Activated T-helper 2 cell treated with anti-CD3 and anti-CD28 coated beads, Interferon-gamma antibody, Interleukin-2, Interleukin-4, amounts not matched to agents 10 μg/mL and 5 μg/mL and 100 μg/mL, durations not matched to agents 14 hours and 24 hours and 36 hours (primary cell): ENCODE measurements at regions of chr19 and their contacts with region 1.

Region 1: DNA sequence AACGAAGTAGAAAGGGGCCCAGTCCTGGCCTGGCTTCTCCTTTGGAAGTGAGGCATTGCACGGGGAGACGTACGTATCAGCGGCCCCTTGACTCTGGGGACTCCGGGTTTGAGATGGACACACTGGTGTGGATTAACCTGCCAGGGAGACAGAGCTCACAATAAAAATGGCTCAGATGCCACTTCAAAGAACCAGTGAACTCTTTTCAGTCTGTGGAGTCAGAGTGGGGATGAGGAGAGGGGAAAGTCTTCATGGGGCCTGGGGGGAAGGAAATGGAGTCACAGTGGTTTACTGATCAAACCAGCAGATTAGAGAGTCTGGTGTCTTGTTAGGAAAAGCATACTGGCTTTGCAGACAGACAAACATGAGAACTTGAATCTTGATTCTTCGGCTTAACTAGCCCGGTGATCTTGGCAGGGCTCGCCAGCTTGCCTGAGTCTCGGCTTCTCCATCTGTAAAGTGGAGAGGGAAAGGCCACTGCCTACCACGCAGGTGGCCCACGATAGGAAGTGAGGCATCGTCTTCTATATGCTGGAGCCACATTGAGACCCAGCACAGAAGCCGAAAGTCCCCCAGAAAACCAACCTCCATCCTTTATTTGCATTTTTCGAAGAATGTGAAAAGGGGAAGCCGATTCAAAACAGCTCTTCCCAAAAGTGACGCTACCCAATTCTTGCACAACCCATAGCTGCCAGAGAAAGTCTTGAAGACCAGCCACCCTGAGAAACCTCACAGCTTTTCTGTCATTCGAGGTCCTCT is at the start of gene FFAR1:
- DNase-seq: peak; percentile 23
- H3K4me3 Mint-ChIP-seq: peak within 1 kb of the TSS; percentile 58
- H3K27ac Mint-ChIP-seq: peak within 1 kb of the TSS; percentile 97
- H3K4me1 Mint-ChIP-seq: peaks cover 30% of the 10 kb centered on the region
- H3K27me3 Mint-ChIP-seq: peaks cover 6% of the 10 kb centered on the region
- total RNA-seq, gene FFAR1: 0.09 and 0.21 TPM in 2 replicates

Region 2: GRCh38 chr19:35154525-35155406 is 192.6 kb before region 1 on chr19 and contains the start of gene FXYD5:
- intact Hi-C with region 1: loop called (anchors 5 kb)
- DNase-seq: peak; percentile 54
- H3K4me3 Mint-ChIP-seq: peak within 1 kb of the TSS; percentile 100
- H3K27ac Mint-ChIP-seq: peak within 1 kb of the TSS; percentile 100
- H3K4me1 Mint-ChIP-seq: peaks cover 37% of the 10 kb centered on the region
- H3K27me3 Mint-ChIP-seq: peaks cover 6% of the 10 kb centered on the region
- total RNA-seq, gene FXYD5: 257 and 271 TPM in 2 replicates

Region 3: GRCh38 chr19:35269421-35270117 is 77.8 kb before region 1 on chr19:
- intact Hi-C with region 1: loop called (anchors 5 kb)
- DNase-seq: peak; percentile 76
- H3K4me3 Mint-ChIP-seq: peak overlapping the region; percentile 72
- H3K27ac Mint-ChIP-seq: peak overlapping the region; percentile 67
- H3K4me1 Mint-ChIP-seq: peaks cover 12% of the 10 kb centered on the region
- H3K27me3 Mint-ChIP-seq: no peaks in the 10 kb centered on the region

Region 4: DNA sequence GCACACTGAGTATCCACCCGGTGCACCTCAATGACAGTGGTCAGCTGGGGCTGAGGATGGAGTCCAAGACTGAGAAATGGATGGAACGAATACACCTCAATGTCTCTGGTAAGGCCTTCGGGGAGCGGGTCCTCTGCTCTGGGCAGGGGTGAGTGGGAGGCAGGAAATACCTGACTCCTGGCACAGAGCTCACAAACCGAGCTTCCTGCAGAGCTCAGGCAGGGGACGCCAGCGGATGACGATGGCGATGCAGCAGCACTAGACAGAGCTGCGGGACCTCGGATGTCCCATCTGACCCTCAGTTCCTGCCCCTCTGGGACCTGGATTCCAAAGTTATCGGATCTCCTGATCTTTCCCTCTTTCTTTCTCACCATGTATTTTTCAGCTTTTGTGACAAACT is 14.5 kb before region 1 on chr19:
- intact Hi-C with region 1: loop called (anchors 2 kb)
- DNase-seq: no peak
- H3K4me3 Mint-ChIP-seq: no peak overlapping the region
- H3K27ac Mint-ChIP-seq: peak overlapping the region; percentile 34
- H3K4me1 Mint-ChIP-seq: peaks cover 20% of the 10 kb centered on the region
- H3K27me3 Mint-ChIP-seq: no peaks in the 10 kb centered on the region

Region 5: DNA sequence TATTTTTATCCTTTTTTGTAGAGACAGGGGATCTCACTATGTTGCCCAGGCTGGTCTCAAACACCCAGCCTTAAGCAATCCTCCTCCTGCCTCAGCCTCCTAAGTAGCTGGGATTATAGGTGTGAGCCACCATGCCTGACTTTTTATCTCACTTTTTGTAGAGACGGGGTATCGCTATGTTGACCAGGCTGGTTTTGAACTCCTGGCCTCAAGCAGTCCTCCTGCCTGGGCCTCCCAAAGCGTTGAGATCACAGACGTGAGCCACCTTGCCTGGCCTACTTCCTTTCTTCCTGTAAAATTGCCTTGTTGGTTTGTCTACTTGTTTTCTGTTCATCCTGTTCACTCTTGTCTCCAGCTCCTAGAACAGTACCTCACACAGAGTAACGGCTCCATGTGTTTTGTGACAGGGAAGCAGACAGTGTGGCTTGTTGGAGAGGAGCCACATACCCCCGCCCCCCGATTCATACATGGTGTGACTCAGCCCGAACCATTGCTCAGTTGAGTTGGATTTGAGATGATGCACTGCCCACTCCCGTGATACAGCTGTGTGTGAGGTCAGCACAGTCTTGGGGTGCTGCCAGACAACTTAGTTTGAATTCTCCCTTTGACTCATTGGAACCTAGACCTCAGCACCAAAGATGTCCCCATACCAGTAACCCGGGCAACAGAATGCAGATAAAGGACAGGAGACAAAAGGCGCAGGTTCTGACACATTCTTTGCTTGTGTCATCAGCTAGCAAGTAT is 57.7 kb after region 1 on chr19:
- intact Hi-C with region 1: loop called (anchors 2 kb)
- DNase-seq: peak; percentile 20
- H3K4me3 Mint-ChIP-seq: no peak overlapping the region
- H3K27ac Mint-ChIP-seq: peak overlapping the region; percentile 80
- H3K4me1 Mint-ChIP-seq: peaks cover 22% of the 10 kb centered on the region
- H3K27me3 Mint-ChIP-seq: peaks cover 11% of the 10 kb centered on the region

Region 6: GRCh38 chr19:35451338-35452096 is 104.2 kb after region 1 on chr19:
- intact Hi-C with region 1: loop called (anchors 1 kb)
- DNase-seq: peak; percentile 14
- H3K4me3 Mint-ChIP-seq: peak overlapping the region; percentile 10
- H3K27ac Mint-ChIP-seq: peak overlapping the region; percentile 88
- H3K4me1 Mint-ChIP-seq: peaks cover 39% of the 10 kb centered on the region
- H3K27me3 Mint-ChIP-seq: peaks cover 32% of the 10 kb centered on the region

Region 7: DNA sequence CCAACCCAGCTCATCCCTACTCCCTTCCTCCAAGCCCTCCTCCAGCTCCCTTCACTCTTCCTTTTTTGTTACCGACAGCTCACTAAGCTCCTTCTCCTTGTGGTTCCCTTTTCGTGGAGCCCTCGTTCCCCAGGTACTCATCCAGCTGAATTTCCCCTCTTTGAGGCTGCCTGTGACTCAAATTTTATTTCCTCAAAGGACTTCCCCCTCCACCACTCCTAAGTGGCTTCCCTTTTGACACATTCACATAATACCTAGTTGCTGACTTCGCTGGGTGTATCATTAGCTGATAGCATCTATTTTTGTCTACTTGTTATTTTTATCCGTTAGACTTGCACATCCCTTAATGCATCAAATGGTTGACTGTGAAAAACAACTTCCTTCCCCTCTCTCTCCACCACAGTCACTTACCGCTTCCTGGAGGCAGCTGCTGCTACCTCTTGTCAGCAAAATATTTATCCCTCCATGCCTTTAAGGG is 115.2 kb after region 1 on chr19:
- intact Hi-C with region 1: loop called (anchors 1 kb)
- DNase-seq: peak; percentile 60
- H3K4me3 Mint-ChIP-seq: peak overlapping the region; percentile 60
- H3K27ac Mint-ChIP-seq: peak overlapping the region; percentile 88
- H3K4me1 Mint-ChIP-seq: peaks cover 45% of the 10 kb centered on the region
- H3K27me3 Mint-ChIP-seq: peaks cover 4% of the 10 kb centered on the region